Activated naive CD4-positive, alpha-beta T cell treated with anti-CD3 and anti-CD28 coated beads for 36 hours (primary cell): ENCODE measurements at regions of chr17 and their contacts with region 1.

Region 1: GRCh38 chr17:28041068-28041843 is 1.2 kb upstream of the NLK start:
- DNase-seq: peak; percentile 99
- H3K4me3 Mint-ChIP-seq: peak overlapping the region; percentile 81
- H3K27ac Mint-ChIP-seq: peak overlapping the region; percentile 73
- H3K4me1 Mint-ChIP-seq: peaks cover 42% of the 10 kb centered on the region
- H3K27me3 Mint-ChIP-seq: no peaks in the 10 kb centered on the region

Region 2: GRCh38 chr17:27466743-27467375 is 574.4 kb before region 1 on chr17:
- CTCF ChIA-PET with region 1: no interaction called
- intact Hi-C with region 1: loop called (anchors 2 kb)
- DNase-seq: peak; percentile 94
- H3K4me3 Mint-ChIP-seq: peak overlapping the region; percentile 67
- H3K27ac Mint-ChIP-seq: peak overlapping the region; percentile 98
- H3K4me1 Mint-ChIP-seq: peaks cover 88% of the 10 kb centered on the region
- H3K27me3 Mint-ChIP-seq: no peaks in the 10 kb centered on the region

Region 3: GRCh38 chr17:28078341-28079229 is 37.3 kb after region 1 on chr17:
- CTCF ChIA-PET with region 1: no interaction called
- intact Hi-C with region 1: loop called (anchors 5 kb)
- DNase-seq: no peak
- H3K4me3 Mint-ChIP-seq: no peak overlapping the region
- H3K27ac Mint-ChIP-seq: no peak overlapping the region
- H3K4me1 Mint-ChIP-seq: peaks cover 42% of the 10 kb centered on the region
- H3K27me3 Mint-ChIP-seq: no peaks in the 10 kb centered on the region

Region 4: GRCh38 chr17:28133562-28133970 is 92.3 kb after region 1 on chr17:
- CTCF ChIA-PET with region 1: no interaction called
- intact Hi-C with region 1: loop called (anchors 1 kb)
- DNase-seq: no peak
- H3K4me3 Mint-ChIP-seq: no peak overlapping the region
- H3K27ac Mint-ChIP-seq: no peak overlapping the region
- H3K4me1 Mint-ChIP-seq: peaks cover 10% of the 10 kb centered on the region
- H3K27me3 Mint-ChIP-seq: no peaks in the 10 kb centered on the region

Region 5: DNA sequence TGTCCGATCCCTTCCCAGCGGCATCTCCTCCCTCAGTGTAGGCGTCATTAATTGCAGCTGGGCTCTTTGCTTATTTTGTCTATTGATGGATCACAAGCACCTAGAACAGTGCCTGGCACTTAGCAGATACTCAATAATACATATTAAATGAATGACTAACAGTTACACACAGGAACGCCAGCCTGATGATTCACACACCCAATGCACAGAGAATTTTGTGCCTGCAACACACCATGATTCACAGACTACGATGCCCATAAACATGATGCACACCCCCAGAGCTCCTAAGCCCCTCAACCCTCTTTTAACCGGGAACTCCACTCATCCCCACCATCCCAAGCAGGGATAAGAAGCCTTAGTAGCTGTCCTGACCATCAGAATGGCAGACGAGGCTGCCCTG is 211.2 kb after region 1 on chr17:
- CTCF ChIA-PET with region 1: no interaction called
- intact Hi-C with region 1: loop called (anchors 5 kb)
- DNase-seq: no peak
- H3K4me3 Mint-ChIP-seq: no peak overlapping the region
- H3K27ac Mint-ChIP-seq: no peak overlapping the region
- H3K4me1 Mint-ChIP-seq: peaks cover 5% of the 10 kb centered on the region
- H3K27me3 Mint-ChIP-seq: peaks cover 4% of the 10 kb centered on the region

Region 6: DNA sequence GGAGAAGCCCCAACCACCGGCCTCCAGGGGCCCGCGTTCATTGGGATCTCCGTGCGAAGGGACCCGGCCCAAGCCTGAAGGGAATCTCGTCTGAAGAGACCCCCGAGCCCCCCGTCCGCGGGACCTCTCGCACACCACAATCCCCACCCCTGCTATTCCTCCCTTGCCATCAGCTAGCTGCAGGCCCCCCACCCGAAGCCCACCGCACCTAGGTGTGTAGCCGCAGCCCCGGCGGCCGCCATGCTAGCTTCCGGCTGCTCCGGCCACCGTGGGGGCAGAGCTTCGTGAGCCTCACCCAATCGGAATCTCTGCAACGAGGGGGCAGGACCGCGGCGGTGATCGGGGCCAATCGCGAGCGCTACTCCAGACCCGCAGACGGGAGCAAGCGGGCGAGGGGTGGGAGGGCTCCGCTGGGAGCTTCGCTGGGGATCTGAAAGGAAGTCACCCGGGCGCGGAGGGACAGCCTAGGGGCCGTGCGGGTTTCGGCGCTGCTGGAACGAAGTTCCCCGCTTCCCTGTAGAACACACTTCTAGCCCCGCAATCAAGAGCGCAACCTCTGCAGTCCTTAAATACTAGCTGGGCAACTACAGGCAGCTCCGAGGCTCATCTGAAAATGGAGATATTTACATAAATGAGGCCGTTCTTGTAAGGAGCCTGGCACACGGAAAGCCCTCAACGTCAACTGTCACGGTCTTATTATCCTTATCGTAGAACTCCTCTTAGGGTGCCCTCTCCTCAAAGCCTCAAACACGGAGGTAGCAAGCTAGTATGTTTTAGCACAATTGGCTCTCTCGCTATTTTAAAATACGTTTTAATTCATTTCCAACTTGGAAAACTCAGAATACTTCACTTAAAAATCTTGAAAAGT is 530.2 kb after region 1 on chr17 and contains the start of gene PIGS:
- CTCF ChIA-PET with region 1: no interaction called
- intact Hi-C with region 1: loop called (anchors 10 kb)
- DNase-seq: peak; percentile 96
- H3K4me3 Mint-ChIP-seq: peak within 1 kb of the TSS; percentile 85
- H3K27ac Mint-ChIP-seq: peak within 1 kb of the TSS; percentile 91
- H3K4me1 Mint-ChIP-seq: peaks cover 50% of the 10 kb centered on the region
- H3K27me3 Mint-ChIP-seq: no peaks in the 10 kb centered on the region
- total RNA-seq, gene PIGS: 34.8 to 36.0 TPM